BJ (cell line): ENCODE measurements at regions of chr19 and their contacts with region 1.

Region 1: GRCh38 chr19:14472202-14472938 is 2.8 kb downstream of the PTGER1 start:
- DNase-seq: no peak
- H3K4me3 ChIP-seq: no peak overlapping the region
- H3K27me3 ChIP-seq: no peaks in the 10 kb centered on the region; the same call in 1 of the 2 replicates
- CTCF ChIP-seq: peak; percentile 94

Region 2: GRCh38 chr19:14265290-14266036 is 206.9 kb before region 1 on chr19:
- CTCF ChIA-PET with region 1: no interaction called
- POLR2A ChIA-PET with region 1: no interaction called
- DNase-seq: no peak
- H3K4me3 ChIP-seq: no peak overlapping the region
- H3K27me3 ChIP-seq: peaks cover 25% of the 10 kb centered on the region
- CTCF ChIP-seq: no peak

Region 3: DNA sequence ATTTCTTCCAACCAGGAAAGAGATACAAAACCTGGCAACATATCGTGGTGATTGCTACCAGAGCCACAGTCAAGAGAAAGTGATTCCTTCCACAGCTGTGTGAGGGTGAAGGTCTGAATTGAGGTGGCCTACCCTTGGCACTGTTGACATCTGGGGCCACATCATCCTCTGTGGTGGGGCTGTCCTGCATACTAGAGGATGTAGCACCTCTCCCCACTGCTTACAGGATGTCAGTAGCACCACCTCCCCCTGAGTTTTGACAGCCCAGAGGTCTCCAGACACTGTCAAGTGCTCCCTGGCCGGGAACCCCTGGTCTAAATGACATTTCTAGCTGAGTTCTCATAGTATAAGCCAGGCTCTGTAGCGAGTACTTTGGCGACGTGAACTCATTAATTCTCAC is 12.7 kb before region 1 on chr19:
- CTCF ChIA-PET with region 1: interaction called, 14 read pairs
- POLR2A ChIA-PET with region 1: no interaction called
- DNase-seq: no peak
- H3K4me3 ChIP-seq: no peak overlapping the region
- H3K27me3 ChIP-seq: no peaks in the 10 kb centered on the region
- CTCF ChIP-seq: no peak

Region 4: DNA sequence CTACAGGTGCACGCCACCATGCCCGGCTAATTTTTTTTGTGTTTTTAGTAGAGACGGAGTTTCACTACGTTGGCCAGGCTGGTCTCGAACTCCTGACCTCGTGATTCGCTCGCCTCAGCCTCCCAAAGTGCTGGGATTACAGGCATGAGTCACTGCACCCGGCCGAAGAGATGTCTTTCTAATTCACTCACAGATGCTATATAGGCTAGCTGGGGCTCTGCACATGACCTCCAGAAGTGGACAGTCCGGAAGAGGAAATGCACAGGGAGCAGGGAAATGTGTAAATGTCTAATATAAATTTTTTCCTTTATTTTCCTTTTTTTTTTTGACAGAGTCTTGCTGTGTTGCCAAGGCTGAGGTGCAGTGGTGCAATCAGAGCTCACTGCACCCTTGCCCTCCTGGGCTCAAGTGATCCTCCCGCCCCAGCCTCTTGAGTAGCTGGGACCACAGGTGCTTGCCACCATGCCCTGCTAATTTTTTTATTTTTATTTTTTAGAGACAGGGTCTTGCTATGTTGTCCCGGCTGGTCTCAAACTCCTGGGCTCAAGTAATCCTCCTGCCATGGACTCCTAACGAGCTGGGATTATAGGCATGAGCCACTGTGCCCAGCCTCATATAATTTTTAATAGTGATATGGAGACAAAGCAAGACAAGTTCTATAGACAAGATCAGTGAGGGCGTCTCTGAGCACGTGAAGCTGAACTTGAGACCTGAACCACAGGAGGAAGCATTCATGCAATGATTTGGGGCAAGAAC is 15.2 kb after region 1 on chr19:
- CTCF ChIA-PET with region 1: interaction called, 24 read pairs
- POLR2A ChIA-PET with region 1: interaction called, 8 read pairs
- DNase-seq: no peak
- H3K4me3 ChIP-seq: no peak overlapping the region
- H3K27me3 ChIP-seq: no peaks in the 10 kb centered on the region
- CTCF ChIP-seq: no peak